Head of caudate nucleus (tissue), 42 donors: ENCODE measurements at regions of chr20 and their contacts with region 1.

Region 1: DNA sequence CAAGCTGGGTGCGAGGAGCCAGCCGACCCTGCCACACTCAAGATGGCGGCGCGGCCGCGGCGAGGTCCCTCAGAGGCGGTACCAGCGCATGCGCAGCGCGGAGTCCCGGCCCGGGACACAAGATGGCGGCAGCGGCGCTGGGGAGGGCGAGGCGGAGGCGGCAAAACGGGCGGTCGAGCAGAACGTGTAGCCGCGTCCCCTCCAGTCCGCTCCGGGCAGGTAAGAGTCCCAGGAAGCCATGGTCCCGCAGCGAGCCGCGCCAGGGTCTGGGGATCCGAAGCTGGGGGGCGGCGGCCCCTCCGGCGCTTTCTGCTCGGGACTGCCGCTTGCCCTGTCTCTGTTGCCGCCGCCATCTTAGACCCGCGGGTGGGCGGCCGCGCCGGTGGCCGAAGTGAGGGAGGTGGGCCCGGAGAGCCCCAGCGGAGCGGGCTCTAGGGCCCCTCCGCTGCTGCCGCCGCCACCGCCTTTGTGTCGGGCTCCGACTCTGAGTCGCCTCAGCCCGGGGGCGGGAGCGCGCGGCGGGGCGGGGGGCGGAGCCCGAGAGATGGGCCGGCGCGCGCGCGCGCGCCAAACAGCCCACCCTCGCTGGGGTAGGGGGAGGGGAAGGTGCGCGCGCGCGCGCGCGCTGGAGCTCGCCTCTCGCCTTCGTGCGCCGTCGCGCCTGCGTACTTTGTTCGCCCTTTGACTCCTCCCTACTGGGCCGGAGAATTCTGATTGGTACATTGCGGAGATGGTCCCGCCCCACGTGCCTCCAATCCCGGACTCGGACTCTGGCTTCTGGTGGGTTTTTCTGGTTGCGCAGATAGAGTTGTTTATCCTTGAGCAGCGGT is at the start of gene PCIF1:
- DNase-seq: peak; percentile 95 to 99 (median 98)

Region 2: GRCh38 chr20:45812157-45813020 is 122.4 kb before region 1 on chr20 and contains the start of gene UBE2C:
- intact Hi-C with region 1: loop called (anchors 10 kb)
- DNase-seq: peak; percentile 93 to 100 (median 98)

Region 3: DNA sequence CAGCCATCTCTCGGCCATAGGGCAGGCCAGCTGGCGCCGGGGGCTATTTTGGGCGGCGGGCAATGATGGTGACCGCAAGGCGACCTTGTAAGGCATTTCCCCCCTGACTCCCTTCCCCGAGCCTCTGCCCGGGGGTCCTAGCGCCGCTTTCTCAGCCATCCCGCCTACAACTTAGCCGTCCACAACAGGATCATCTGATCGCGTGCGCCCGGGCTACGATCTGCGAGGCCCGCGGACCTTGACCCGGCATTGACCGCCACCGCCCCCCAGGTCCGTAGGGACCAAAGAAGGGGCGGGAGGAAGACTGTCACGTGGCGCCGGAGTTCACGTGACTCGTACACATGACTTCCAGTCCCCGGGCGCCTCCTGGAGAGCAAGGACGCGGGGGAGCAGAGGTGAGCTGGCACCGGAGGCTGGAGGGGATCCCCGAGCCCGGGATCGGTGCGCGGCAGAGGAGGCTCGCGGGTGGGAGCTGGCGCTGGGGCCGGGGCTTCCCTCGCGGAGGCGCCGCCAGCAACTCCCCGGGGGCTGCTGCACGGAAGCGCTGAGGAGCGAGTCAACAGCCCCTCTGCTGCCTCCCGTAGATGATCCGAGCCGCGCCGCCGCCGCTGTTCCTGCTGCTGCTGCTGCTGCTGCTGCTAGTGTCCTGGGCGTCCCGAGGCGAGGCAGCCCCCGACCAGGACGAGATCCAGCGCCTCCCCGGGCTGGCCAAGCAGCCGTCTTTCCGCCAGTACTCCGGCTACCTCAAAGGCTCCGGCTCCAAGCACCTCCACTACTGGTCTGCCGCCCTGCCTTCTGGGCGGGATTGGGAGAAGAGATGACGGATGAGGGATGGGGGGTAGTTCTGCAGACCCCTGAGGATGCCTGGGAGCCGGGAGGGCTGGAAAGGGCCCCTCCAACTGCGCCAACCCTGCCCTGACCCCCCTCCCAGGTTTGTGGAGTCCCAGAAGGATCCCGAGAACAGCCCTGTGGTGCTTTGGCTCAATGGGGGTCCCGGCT is 43.5 kb before region 1 on chr20 and contains the starts of genes CTSA and NEURL2:
- intact Hi-C with region 1: loop called (anchors 2 kb)
- DNase-seq: peak; percentile 89 to 98 (median 95)

Region 4: GRCh38 chr20:45971675-45972499 is 37.1 kb after region 1 on chr20 and contains the start of gene ZNF335:
- intact Hi-C with region 1: loop called (anchors 5 kb)
- DNase-seq: peak; percentile 82 to 98 (median 96)